Activated naive CD4-positive, alpha-beta T cell treated with anti-CD3 and anti-CD28 coated beads for 36 hours (primary cell): ENCODE measurements at regions of chr5 and their contacts with region 1.

Region 1: GRCh38 chr5:173615884-173616576 is 420 bp downstream of the BOD1 start:
- DNase-seq: peak; percentile 83
- H3K4me3 Mint-ChIP-seq: peak overlapping the region; percentile 95
- H3K27ac Mint-ChIP-seq: peak overlapping the region; percentile 93
- H3K4me1 Mint-ChIP-seq: peaks cover 48% of the 10 kb centered on the region
- H3K27me3 Mint-ChIP-seq: no peaks in the 10 kb centered on the region

Region 2: DNA sequence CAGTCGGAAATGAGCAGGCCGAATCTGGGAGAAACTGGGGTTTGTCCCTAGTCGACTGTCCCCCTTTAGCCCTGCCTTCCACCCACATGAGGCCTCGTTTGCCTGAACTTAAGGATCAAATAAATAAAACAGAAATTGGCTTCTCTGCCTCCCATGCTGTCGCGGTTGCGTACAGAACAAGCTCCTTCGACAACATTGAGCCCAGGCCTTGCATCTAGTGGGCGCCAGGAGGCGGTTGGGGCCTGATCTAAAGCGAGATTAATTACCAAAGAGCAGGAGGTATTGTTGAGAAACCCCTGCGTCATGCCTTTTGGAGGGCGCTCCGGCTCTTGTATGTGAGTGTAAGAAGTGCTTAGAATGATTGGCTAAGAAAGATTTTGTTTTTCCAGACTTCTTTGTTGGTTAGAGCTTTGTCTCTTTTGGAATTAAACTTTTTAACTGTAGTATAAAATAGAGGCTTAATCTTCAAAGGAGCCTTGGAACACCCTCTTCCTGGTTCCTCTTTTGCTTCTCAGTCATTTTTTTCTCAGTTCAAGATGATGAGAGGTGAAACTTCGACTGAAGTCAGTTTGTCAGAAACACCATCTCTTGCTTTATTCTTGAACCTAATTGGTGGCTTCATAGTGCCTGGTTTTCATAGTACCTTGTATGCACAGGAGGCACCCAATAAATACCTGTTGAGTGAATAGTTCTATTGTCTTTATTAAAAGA is 631.6 kb before region 1 on chr5:
- CTCF ChIA-PET with region 1: no interaction called
- intact Hi-C with region 1: loop called (anchors 2 kb)
- DNase-seq: peak; percentile 91
- H3K4me3 Mint-ChIP-seq: peak overlapping the region; percentile 97
- H3K27ac Mint-ChIP-seq: peak overlapping the region; percentile 97
- H3K4me1 Mint-ChIP-seq: peaks cover 38% of the 10 kb centered on the region
- H3K27me3 Mint-ChIP-seq: no peaks in the 10 kb centered on the region

Region 3: DNA sequence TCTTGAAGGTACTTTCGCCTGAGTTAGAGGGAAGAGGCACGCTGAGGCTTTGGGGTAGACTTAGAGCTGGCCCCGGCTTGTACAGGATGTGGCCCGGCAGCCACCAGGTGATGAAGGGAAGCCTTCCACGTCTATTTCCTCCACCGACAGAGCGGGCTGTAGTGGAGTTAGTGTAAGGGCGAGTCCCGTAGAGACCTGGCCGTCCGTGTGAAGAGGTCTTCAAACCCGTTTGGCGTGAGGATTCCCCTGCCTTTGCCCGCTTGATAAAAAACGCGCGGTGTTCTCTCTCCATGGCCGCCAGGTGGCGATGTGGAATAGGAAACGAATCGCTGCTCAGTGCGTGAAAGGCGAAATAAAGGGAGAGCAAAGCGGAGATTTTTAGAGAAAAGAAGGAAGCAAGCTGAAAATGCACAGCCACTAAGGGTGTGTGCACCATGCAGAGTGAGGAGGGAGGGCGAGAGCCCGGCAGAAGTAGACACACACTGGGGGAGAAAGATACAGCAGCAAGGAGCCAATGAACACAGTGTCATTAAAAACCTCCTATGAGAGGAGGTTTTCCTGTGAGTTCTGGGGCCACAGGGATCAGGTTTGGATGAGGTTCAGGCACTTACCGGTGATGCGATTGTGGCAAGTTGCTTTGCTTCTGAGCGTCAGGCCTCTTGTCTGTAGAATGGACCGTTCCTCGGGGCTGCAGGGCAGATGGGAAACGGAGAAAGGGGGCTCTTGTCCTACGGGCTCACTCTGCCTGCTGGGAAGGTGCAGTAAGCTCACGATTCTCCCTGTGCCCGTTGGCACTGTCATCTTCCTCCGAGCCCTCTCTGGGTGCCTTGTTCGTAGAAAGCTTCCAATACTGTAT is 322.0 kb before region 1 on chr5:
- CTCF ChIA-PET with region 1: no interaction called
- intact Hi-C with region 1: loop called (anchors 2 kb)
- DNase-seq: peak; percentile 84
- H3K4me3 Mint-ChIP-seq: no peak overlapping the region
- H3K27ac Mint-ChIP-seq: no peak overlapping the region
- H3K4me1 Mint-ChIP-seq: peaks cover 11% of the 10 kb centered on the region
- H3K27me3 Mint-ChIP-seq: peaks cover 40% of the 10 kb centered on the region

Region 4: DNA sequence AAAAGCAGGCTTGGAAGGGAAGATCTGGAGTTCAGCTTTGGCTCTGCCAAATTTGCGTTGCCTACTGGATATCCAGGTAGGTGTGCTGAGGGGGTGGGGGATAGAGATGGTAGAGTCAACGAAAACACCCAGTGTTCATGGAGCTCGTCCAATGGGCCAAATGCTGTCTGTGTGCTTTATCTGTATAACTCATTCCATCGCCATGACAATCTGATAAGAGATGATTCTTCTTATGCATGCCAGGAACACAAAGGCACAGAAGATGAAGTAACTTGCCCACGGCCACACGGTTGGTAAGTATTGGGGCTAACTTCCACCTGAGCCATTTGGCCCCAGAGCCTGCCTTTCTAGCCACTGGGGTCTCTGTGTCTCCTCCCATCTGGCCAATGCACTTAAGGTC is 52.8 kb before region 1 on chr5:
- CTCF ChIA-PET with region 1: no interaction called
- intact Hi-C with region 1: no loop called
- DNase-seq: no peak
- H3K4me3 Mint-ChIP-seq: no peak overlapping the region
- H3K27ac Mint-ChIP-seq: no peak overlapping the region
- H3K4me1 Mint-ChIP-seq: no peaks in the 10 kb centered on the region
- H3K27me3 Mint-ChIP-seq: peaks cover 14% of the 10 kb centered on the region

Region 5: DNA sequence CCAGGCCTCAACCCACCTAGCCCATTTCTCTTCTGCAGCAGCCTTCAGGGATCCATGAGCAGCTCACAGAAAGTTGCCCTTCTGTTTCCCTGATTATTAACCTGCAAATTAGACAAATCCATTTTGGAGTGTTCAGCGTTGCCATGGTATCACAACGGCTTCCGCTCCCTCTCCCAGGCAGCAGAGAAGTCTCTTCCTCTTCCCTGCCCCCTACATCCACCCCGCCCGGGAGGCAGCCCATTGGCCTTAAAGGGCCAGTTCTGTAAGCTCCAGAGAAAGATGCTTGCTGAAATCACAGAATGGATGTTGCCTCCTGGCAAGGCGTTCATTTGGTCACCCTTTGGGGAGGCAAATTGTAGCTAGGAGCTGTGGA is 48.1 kb after region 1 on chr5:
- CTCF ChIA-PET with region 1: no interaction called
- intact Hi-C with region 1: no loop called
- DNase-seq: no peak
- H3K4me3 Mint-ChIP-seq: no peak overlapping the region
- H3K27ac Mint-ChIP-seq: no peak overlapping the region
- H3K4me1 Mint-ChIP-seq: no peaks in the 10 kb centered on the region
- H3K27me3 Mint-ChIP-seq: no peaks in the 10 kb centered on the region

Region 6: GRCh38 chr5:173887610-173888472 is 271.8 kb after region 1 on chr5 and contains the start of gene CPEB4:
- CTCF ChIA-PET with region 1: interaction called, 4 read pairs
- intact Hi-C with region 1: loop called (anchors 1 kb)
- DNase-seq: peak; percentile 98
- H3K4me3 Mint-ChIP-seq: peak within 1 kb of the TSS; percentile 98
- H3K27ac Mint-ChIP-seq: peak within 1 kb of the TSS; percentile 96
- H3K4me1 Mint-ChIP-seq: peaks cover 66% of the 10 kb centered on the region
- H3K27me3 Mint-ChIP-seq: no peaks in the 10 kb centered on the region
- total RNA-seq, gene CPEB4: 7.6 to 7.8 TPM

Region 7: GRCh38 chr5:173925448-173926071 is 309.5 kb after region 1 on chr5:
- CTCF ChIA-PET with region 1: interaction called, 10 read pairs
- intact Hi-C with region 1: loop called (anchors 1 kb)
- DNase-seq: peak; percentile 75
- H3K4me3 Mint-ChIP-seq: no peak overlapping the region
- H3K27ac Mint-ChIP-seq: no peak overlapping the region
- H3K4me1 Mint-ChIP-seq: peaks cover 42% of the 10 kb centered on the region
- H3K27me3 Mint-ChIP-seq: no peaks in the 10 kb centered on the region

Region 8: DNA sequence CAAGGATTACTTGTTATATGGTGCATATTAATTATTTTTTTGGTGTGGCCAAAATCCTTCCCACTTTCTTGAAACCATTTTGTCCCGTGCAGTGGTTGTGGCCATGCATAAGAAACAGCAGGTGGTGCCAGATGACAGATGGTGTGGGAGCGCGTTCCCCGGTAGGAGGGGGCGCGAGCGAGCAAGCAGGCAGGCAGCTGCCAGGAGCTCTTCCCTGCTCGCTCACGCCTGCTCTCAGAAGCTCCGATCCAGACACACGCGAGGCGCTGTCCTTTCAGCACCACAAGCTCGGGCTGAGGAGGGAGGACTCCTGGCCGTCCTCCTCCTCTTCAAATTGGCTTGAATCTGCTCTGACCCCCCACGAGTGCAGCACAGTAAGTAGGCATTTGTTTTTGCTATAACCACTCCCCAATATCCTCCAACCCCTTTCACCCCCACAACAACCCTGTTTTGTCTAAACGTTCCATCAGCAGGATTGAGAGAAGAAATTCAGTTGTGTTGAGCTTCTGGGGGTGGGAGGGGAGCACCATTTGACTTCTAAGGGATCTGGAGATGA is 429.5 kb after region 1 on chr5 and contains the start of gene NSG2:
- CTCF ChIA-PET with region 1: no interaction called
- intact Hi-C with region 1: loop called (anchors 1 kb)
- DNase-seq: peak; percentile 62
- H3K4me3 Mint-ChIP-seq: no peak within 1 kb of the TSS
- H3K27ac Mint-ChIP-seq: no peak within 1 kb of the TSS
- H3K4me1 Mint-ChIP-seq: no peaks in the 10 kb centered on the region
- H3K27me3 Mint-ChIP-seq: peaks cover 37% of the 10 kb centered on the region
- total RNA-seq, gene NSG2: not detected

Region 9: GRCh38 chr5:175478384-175479124 is 1862.5 kb after region 1 on chr5 and contains the start of gene SFXN1:
- CTCF ChIA-PET with region 1: no interaction called
- intact Hi-C with region 1: loop called (anchors 1 kb)
- DNase-seq: peak; percentile 86
- H3K4me3 Mint-ChIP-seq: peak within 1 kb of the TSS; percentile 94
- H3K27ac Mint-ChIP-seq: peak within 1 kb of the TSS; percentile 97
- H3K4me1 Mint-ChIP-seq: peaks cover 56% of the 10 kb centered on the region
- H3K27me3 Mint-ChIP-seq: no peaks in the 10 kb centered on the region
- total RNA-seq, gene SFXN1: 350 to 358 TPM